ENCODE measurements at regions of chr5 and their contacts with region 1.

Region 1: DNA sequence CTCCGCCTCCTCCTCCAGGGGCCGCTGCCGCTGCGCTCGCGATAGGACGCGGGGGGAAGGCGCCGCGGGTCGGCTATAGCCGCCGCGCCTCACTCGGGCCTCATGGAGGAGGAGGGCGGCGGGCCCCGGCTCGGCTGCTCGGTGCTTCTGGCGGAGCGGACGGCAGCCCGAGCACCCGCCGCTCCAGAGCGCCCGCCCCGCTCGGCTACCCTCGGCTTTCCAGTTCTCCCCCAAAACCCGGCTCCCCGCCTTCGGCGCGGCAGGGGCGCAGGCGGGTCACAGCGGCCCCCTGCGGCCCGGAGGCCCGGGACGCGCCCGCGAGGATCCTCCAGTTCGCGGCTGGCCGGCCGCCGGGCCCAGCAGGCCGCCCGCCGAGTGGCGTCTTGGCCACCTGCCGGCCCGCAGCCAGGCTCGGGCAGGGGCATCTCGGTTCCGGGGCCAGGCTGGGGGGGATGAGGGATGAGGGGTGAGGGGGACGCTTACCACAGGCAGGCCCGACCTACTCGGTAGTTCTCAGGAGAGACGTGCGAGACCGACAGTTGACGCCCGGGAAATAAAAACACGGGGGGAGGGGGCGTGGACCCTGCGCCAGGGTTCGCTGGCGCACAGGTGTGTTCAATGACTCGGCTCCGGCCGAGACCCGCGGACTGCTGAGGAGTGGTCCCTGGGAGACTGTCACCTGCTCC is at the start of gene PAIP1:
- DNase-seq: peak; percentile 73
- H3K4me3 ChIP-seq: peak within 1 kb of the TSS; percentile 70 to 85
- H3K27ac ChIP-seq: peak within 1 kb of the TSS; percentile 93 to 97
- H3K4me1 ChIP-seq: no peaks in the 10 kb centered on the region
- H3K27me3 ChIP-seq: no peaks in the 10 kb centered on the region
- CTCF ChIP-seq: peak; percentile 48 to 71 (median 55)
- POLR2A ChIP-seq: peak; percentile 22
- total RNA-seq, gene PAIP1: 84.6 to 150 TPM

Region 2: GRCh38 chr5:43367909-43368648 is 188.9 kb before region 1 on chr5:
- intact Hi-C with region 1: no loop called
- DNase-seq: no peak
- H3K4me3 ChIP-seq: no peak overlapping the region
- H3K27ac ChIP-seq: no peak overlapping the region
- H3K4me1 ChIP-seq: no peaks in the 10 kb centered on the region
- H3K27me3 ChIP-seq: no peaks in the 10 kb centered on the region
- CTCF ChIP-seq: no peak
- POLR2A ChIP-seq: no peak

Region 3: DNA sequence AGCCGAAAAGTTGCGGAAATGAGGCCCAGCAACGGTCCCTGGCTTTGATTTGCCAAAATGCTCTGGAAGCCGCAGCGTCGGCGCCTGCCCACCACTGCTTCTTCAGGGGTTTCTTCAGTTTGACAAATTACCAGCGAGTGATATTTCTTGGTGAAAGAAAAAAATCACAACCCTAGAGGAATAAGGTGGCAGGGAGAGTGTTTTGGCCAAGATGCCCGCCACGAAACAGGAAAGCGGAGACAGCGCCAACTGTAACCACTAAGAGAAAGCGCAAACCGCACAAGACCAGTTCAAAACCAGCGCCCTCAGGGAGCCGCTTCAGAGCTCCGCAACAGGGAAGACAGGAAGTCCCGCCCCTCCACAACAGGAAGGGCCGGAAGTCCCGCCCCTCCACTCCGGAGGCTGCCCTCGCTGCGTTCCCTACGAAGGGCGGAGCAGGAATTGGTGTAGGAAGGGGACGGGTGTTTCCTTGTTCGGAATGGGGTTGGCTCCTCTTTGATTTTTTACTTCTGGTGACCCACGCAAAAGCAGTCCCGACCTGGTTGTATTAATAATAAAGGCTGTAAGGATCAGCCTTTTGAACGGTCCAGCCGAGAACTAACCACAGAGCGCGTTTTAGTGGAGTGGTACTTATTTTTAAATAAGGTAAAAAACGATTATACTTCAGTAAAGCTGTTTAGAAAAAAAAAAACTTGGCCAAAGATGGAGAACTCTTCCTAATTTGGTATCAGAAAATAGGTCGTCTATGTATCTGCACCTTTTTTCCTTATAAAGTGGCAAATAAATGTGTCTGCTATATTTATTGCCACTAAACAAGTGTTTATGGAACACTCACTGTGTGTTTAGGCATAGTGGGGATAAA is 42.0 kb before region 1 on chr5 and contains the start of gene C5orf34:
- intact Hi-C with region 1: loop called (anchors 5 kb)
- DNase-seq: peak; percentile 97
- H3K4me3 ChIP-seq: peak within 1 kb of the TSS; percentile 52 to 54
- H3K27ac ChIP-seq: peak within 1 kb of the TSS; percentile 74 to 81
- H3K4me1 ChIP-seq: no peaks in the 10 kb centered on the region
- H3K27me3 ChIP-seq: no peaks in the 10 kb centered on the region
- CTCF ChIP-seq: peak in 1 of 4 experiments; percentile 32
- POLR2A ChIP-seq: peak; percentile 73
- total RNA-seq, gene C5orf34: 1.5 to 4.5 TPM

Region 4: GRCh38 chr5:43573058-43573457 is 16.1 kb after region 1 on chr5:
- intact Hi-C with region 1: loop called (anchors 2 kb)
- DNase-seq: no peak
- H3K4me3 ChIP-seq: no peak overlapping the region
- H3K27ac ChIP-seq: no peak overlapping the region
- H3K4me1 ChIP-seq: no peaks in the 10 kb centered on the region
- H3K27me3 ChIP-seq: no peaks in the 10 kb centered on the region
- CTCF ChIP-seq: no peak
- POLR2A ChIP-seq: no peak

Region 5: DNA sequence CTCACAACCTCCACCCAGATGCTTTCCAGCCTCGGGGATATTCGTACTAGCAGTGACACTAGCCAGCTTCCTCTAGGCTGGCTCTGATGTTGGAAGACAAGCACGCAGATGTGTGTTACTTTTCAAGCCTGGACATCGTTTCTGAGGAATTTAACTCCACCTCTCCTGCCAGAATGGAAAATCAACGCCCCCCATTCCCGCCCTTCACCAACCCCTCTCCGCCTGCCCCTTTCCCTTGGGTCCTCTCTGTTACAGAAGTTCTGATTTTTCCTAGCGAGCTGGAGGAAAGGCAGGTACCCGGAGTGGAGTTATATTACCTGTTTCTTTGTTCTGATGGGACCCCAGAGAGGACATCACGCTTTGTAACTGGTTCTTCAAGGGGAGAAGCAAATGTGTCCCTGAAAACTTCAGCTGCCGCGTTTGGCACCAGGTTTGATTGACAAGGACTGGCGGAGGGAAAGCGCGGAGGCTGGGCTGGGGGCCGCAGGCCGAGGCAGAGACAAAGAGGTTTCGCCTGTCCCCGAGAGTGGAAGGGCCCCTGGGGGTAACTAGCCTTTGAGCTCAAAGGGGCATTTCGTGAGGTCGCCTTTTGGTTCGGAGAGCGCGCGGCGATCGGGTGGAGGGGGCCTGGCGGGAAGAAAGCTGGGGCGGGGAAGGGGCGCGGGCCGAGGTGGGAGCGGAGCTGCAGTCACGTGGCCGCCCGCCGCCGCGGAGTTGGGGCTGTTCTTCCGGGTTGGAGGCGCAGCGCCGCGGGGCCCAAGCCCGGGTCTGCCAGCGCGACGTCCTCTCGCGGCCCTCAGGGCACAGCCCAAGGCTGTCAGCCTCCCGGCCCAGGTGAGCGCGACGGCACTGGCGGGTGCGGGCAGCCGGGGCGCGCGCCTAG is 45.7 kb after region 1 on chr5 and contains the start of gene NNT:
- intact Hi-C with region 1: loop called (anchors 1 kb)
- DNase-seq: peak; percentile 77
- H3K4me3 ChIP-seq: peak within 1 kb of the TSS; percentile 54 to 75
- H3K27ac ChIP-seq: peak within 1 kb of the TSS; percentile 77 to 79
- H3K4me1 ChIP-seq: no peaks in the 10 kb centered on the region
- H3K27me3 ChIP-seq: no peaks in the 10 kb centered on the region
- CTCF ChIP-seq: no peak
- POLR2A ChIP-seq: no peak
- total RNA-seq, gene NNT: 30.6 to 31.4 TPM